Activated T-helper 1 cell treated with anti-CD3 and anti-CD28 coated beads, Interleukin-12 subunit alpha, Interleukin-12 subunit beta, Interleukin-2, Interleukin-4 antibody, amounts not matched to agents 30 ng/mL and 10 ng/mL and 1 ng/mL, durations not matched to agents 14 hours and 24 hours and 36 hours (primary cell): ENCODE measurements at regions of chr1 and their contacts with region 1.

Region 1: DNA sequence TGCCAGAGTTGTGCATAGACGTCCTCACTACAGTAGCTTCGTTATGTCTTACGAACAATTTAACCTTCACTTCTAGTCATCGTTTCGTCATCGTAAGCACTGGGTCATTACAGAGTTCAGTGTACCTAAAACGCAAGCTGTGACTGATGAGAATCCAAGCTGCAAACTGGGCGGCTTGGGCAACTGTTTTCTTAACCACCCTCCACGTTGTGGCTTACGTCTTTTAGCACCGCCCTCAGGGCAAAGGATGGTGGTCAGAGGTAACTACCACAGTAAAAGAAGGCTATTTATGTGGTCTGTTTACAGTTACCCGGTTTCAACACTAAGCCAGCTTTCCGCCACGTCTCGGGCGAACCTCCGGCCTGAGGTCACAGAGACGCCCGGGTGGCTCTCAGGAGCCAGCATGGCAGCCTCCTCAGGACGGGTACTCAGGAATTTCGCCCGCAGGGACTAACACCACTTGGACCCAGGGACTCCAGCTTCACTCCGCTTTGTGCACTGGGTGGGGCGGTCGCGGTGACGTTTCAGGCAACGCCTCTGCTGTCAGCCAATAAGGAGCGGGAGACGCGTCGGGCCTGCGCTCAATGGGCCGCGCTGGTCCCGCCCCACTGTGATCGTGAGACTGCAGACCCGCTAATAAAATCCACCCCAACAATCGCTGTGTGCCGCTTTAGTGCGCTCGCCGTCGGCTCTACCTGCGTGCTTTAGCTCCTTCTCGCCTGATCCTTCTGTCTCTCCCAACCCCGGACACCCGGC is at the start of gene CTH:
- DNase-seq: peak; percentile 91
- H3K4me3 Mint-ChIP-seq: peak within 1 kb of the TSS; percentile 94
- H3K27ac Mint-ChIP-seq: peak within 1 kb of the TSS; percentile 89
- H3K4me1 Mint-ChIP-seq: peaks cover 33% of the 10 kb centered on the region
- H3K27me3 Mint-ChIP-seq: peaks cover 8% of the 10 kb centered on the region
- total RNA-seq, gene CTH: 13.3 and 13.7 TPM in 2 replicates

Region 2: DNA sequence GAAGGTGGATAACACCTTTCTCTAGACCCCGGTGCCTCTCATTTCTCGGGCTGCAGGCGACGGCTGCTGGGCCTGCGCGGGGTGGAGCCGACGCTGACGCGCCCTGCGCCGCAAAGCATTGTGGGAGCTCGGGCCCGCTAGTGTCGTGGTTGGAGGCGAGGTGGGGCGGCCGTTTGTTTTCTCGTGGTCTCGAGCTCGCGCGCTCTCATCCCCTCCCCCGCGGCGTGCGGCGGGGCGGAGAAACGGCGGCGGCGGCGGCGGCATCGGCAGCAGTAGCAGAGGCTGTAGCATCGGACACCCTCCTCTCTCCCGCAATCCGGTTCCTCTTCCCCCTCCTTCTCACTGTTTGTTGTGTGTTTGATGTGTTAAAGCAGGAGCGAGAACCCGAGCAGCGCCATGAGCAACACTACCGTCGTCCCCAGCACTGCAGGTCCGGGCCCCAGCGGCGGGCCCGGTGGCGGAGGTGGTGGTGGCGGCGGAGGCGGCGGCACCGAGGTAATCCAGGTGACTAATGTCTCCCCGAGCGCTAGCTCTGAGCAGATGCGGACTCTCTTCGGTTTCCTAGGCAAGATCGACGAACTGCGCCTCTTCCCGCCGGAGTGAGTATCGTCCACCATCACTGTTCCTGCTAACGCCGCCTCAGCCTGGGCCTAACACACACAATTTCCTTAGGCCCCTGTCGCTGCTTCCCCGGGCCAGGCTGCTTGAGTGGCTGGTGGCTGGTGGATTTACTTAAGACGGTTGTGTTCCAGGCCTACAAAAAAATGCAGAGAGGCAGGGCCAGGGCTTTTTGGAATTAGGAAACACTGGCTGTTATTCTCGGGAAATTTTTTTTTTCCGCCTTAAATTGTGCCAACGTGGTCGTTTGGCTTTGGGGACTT is 189.3 kb before region 1 on chr1 and contains the start of gene SRSF11:
- intact Hi-C with region 1: loop called (anchors 1 kb)
- DNase-seq: peak; percentile 95
- H3K4me3 Mint-ChIP-seq: peak within 1 kb of the TSS; percentile 93
- H3K27ac Mint-ChIP-seq: peak within 1 kb of the TSS; percentile 99
- H3K4me1 Mint-ChIP-seq: peaks cover 43% of the 10 kb centered on the region
- H3K27me3 Mint-ChIP-seq: no peaks in the 10 kb centered on the region
- total RNA-seq, gene SRSF11: 199 and 202 TPM in 2 replicates

Region 3: GRCh38 chr1:70436622-70437251 is 26.0 kb after region 1 on chr1:
- intact Hi-C with region 1: loop called (anchors 2 kb)
- DNase-seq: no peak
- H3K4me3 Mint-ChIP-seq: no peak overlapping the region
- H3K27ac Mint-ChIP-seq: no peak overlapping the region
- H3K4me1 Mint-ChIP-seq: peaks cover 10% of the 10 kb centered on the region
- H3K27me3 Mint-ChIP-seq: no peaks in the 10 kb centered on the region

Region 4: GRCh38 chr1:70509996-70510876 is 99.5 kb after region 1 on chr1:
- intact Hi-C with region 1: loop called (anchors 2 kb)
- DNase-seq: no peak
- H3K4me3 Mint-ChIP-seq: no peak overlapping the region
- H3K27ac Mint-ChIP-seq: no peak overlapping the region
- H3K4me1 Mint-ChIP-seq: no peaks in the 10 kb centered on the region
- H3K27me3 Mint-ChIP-seq: peaks cover 4% of the 10 kb centered on the region

Region 5: GRCh38 chr1:70675737-70676156 is 265.0 kb after region 1 on chr1:
- intact Hi-C with region 1: no loop called
- DNase-seq: no peak
- H3K4me3 Mint-ChIP-seq: no peak overlapping the region
- H3K27ac Mint-ChIP-seq: no peak overlapping the region
- H3K4me1 Mint-ChIP-seq: no peaks in the 10 kb centered on the region
- H3K27me3 Mint-ChIP-seq: peaks cover 3% of the 10 kb centered on the region

Region 6: DNA sequence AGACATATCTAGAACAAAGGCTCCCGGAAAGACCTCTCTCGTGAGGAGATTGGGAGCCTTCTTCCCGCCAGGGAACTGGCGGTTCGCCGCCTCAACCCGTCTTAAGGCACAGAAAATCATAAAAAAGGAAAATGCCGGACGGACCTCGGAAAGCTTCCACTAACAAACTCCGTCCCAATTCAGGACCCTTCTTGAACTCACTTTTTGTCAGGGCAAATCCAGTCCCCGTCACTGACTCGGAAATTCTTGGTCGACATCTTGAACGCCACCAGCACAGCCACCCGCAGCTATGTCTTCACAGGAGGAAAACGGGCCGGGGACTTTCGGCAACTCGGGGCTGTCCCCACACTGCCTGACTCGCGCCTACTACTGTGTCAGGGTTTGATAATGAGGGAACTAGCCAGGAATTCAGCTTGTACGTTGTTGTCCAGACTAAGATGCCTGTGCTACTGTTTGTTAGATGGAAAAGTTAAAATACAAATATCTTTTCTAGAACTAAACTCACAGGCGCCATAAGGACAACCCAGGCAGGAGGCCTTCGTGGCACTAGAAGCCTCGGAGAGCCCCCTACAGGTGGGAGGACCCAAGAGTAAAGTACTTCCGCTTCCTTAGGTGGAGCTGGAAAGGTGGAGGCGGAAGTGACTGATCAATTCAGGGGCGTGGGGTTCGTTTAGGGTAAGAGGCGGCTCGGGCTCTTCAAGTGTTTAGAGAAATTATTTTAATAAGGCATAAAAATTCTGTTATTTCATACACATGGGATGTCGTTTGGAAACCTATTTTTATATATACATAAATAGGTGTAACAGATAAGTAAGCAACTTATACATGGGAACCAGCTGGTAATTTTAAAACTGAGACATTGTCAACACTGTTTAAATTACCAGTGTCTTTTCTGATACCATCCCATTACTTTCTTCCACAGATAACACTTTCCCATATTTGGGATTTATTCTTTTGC is 670.2 kb after region 1 on chr1 and contains the start of gene ZRANB2:
- intact Hi-C with region 1: loop called (anchors 1 kb)
- DNase-seq: peak; percentile 86
- H3K4me3 Mint-ChIP-seq: peak within 1 kb of the TSS; percentile 100
- H3K27ac Mint-ChIP-seq: peak within 1 kb of the TSS; percentile 98
- H3K4me1 Mint-ChIP-seq: peaks cover 28% of the 10 kb centered on the region
- H3K27me3 Mint-ChIP-seq: peaks cover 10% of the 10 kb centered on the region
- total RNA-seq, gene ZRANB2: 149 and 152 TPM in 2 replicates